CD4-positive, alpha-beta T cell (primary cell): ENCODE measurements at regions of chr3 and their contacts with region 1.

Region 1: GRCh38 chr3:108489771-108490170 is 20.6 kb downstream of the MYH15 start:
- DNase-seq: peak in 10 of 14 experiments; percentile 8 to 83 (median 25)
- ATAC-seq: peak; percentile 92
- H3K4me3 ChIP-seq: no peak overlapping the region
- H3K4me3 Mint-ChIP-seq: no peak overlapping the region
- H3K27ac ChIP-seq: no peak overlapping the region
- H3K27ac Mint-ChIP-seq: no peak overlapping the region
- H3K4me1 ChIP-seq: no peaks in the 10 kb centered on the region
- H3K4me1 Mint-ChIP-seq: peaks cover 4% of the 10 kb centered on the region
- H3K27me3 ChIP-seq: no peaks in the 10 kb centered on the region
- H3K27me3 Mint-ChIP-seq: no peaks in the 10 kb centered on the region
- CTCF ChIP-seq: peak; percentile 76

Region 2: GRCh38 chr3:108301695-108302404 is 187.9 kb before region 1 on chr3:
- CTCF ChIA-PET with region 1: no interaction called
- POLR2A ChIA-PET with region 1: no interaction called
- intact Hi-C with region 1: no loop called
- DNase-seq: peak in 1 of 14 experiments; percentile 26
- ATAC-seq: no peak
- H3K4me3 ChIP-seq: peak overlapping the region; percentile 4
- H3K4me3 Mint-ChIP-seq: peak overlapping the region; percentile 5
- H3K27ac ChIP-seq: no peak overlapping the region
- H3K27ac Mint-ChIP-seq: no peak overlapping the region
- H3K4me1 ChIP-seq: peaks cover 6% of the 10 kb centered on the region
- H3K4me1 Mint-ChIP-seq: peaks cover 27% of the 10 kb centered on the region
- H3K27me3 ChIP-seq: no peaks in the 10 kb centered on the region
- H3K27me3 Mint-ChIP-seq: no peaks in the 10 kb centered on the region
- CTCF ChIP-seq: no peak

Region 3: DNA sequence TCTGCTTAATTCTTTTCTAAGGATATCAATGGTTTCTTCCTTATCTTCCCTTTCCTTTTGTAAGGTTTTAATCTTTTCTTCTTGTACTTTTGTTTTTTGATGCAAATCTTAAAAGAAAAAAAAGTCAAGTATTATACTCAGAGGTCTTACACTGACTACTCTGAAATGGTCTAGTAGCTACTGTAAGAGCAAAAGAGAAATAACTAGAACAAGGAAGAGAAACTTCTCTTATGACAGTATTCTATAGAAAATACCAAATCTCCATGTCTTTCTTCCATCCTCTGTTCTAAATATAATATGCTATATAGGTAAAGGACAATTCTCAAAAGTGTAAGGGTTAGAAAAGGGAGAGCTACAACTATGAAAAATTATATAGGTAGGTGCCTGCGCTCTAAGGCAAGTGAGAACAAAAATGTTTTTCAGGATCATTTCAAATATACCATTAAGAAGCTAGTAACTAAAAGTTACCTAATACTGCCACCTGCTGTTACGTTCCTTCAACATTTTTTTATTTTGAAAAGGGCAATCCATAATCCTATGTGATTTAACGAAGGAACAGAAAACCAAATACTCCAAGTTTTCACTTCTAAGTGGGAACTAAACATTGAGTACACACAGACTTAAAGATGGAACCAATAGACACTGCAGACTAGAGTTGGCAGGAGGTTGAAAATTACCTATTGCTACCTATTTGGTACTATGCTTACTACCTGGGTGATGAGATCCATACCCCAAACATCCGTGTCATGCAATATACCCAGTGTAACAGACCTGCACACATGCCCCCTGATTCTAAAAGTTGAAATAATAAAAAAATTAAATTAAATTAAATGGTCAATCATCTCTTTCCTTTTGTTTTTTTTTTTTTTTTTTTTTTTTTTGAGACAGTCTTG is 62.7 kb after region 1 on chr3:
- CTCF ChIA-PET with region 1: interaction called, 16 read pairs
- POLR2A ChIA-PET with region 1: no interaction called
- intact Hi-C with region 1: loop called (anchors 1 kb)
- DNase-seq: peak in 4 of 14 experiments; percentile 9 to 68 (median 62)
- ATAC-seq: no peak
- H3K4me3 ChIP-seq: no peak overlapping the region
- H3K4me3 Mint-ChIP-seq: no peak overlapping the region
- H3K27ac ChIP-seq: no peak overlapping the region
- H3K27ac Mint-ChIP-seq: no peak overlapping the region
- H3K4me1 ChIP-seq: no peaks in the 10 kb centered on the region
- H3K4me1 Mint-ChIP-seq: no peaks in the 10 kb centered on the region
- H3K27me3 ChIP-seq: no peaks in the 10 kb centered on the region
- H3K27me3 Mint-ChIP-seq: no peaks in the 10 kb centered on the region
- CTCF ChIP-seq: peak; percentile 62

Region 4: DNA sequence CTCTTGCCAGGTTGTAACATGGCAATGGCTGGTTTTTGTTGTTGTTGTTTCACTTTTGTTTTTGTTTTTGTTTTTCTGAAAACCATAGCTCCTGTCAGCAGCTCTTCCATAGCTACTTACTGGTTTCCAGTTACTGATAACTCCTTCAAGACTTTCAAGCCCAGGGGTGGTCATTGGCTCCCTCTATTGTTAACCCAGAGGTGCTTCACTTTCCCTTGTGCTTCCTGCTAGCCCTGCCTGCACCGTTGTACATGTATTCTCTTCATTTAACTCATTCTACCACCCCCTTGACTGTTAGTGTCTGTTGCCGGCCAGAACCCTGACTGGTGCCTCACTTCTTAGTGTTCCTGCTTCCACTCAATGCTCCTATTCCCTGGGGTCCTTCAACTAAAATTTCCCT is 328.6 kb after region 1 on chr3:
- CTCF ChIA-PET with region 1: no interaction called
- POLR2A ChIA-PET with region 1: interaction called, 3 read pairs
- intact Hi-C with region 1: loop called (anchors 2 to 10 kb)
- DNase-seq: peak; percentile 31 to 87 (median 54)
- ATAC-seq: peak; percentile 92
- H3K4me3 ChIP-seq: no peak overlapping the region
- H3K4me3 Mint-ChIP-seq: peak overlapping the region; percentile 8
- H3K27ac ChIP-seq: no peak overlapping the region
- H3K27ac Mint-ChIP-seq: peak overlapping the region; percentile 29
- H3K4me1 ChIP-seq: peaks cover 22% of the 10 kb centered on the region
- H3K4me1 Mint-ChIP-seq: peaks cover 26% of the 10 kb centered on the region
- H3K27me3 ChIP-seq: no peaks in the 10 kb centered on the region
- H3K27me3 Mint-ChIP-seq: no peaks in the 10 kb centered on the region
- CTCF ChIP-seq: peak; percentile 80

Region 5: GRCh38 chr3:109081746-109082510 is 592.2 kb after region 1 on chr3:
- CTCF ChIA-PET with region 1: no interaction called
- POLR2A ChIA-PET with region 1: no interaction called
- intact Hi-C with region 1: loop called (anchors 2 to 5 kb)
- DNase-seq: peak in 6 of 14 experiments; percentile 1 to 68 (median 9)
- ATAC-seq: no peak
- H3K4me3 ChIP-seq: no peak overlapping the region
- H3K4me3 Mint-ChIP-seq: no peak overlapping the region
- H3K27ac ChIP-seq: no peak overlapping the region
- H3K27ac Mint-ChIP-seq: no peak overlapping the region
- H3K4me1 ChIP-seq: no peaks in the 10 kb centered on the region
- H3K4me1 Mint-ChIP-seq: no peaks in the 10 kb centered on the region
- H3K27me3 ChIP-seq: peaks cover 0 to 3% of the 10 kb centered on the region in 2 experiments
- H3K27me3 Mint-ChIP-seq: peaks cover 33% of the 10 kb centered on the region
- CTCF ChIP-seq: peak; percentile 61